SK-N-SH (cell line): ENCODE measurements at regions of chr17 and their contacts with region 1.

Region 1: GRCh38 chr17:732067-732901 is at the start of gene TLCD3A:
- DNase-seq: peak; percentile 95
- H3K4me3 ChIP-seq: peak within 1 kb of the TSS; percentile 68 to 85
- H3K27ac ChIP-seq: peak within 1 kb of the TSS; percentile 41 to 77; a peak in 3 of 4 replicates
- H3K4me1 ChIP-seq: peaks cover 0 to 8% of the 10 kb centered on the region in 2 experiments; a peak in 1 of 4 replicates
- H3K27me3 ChIP-seq: no peaks in the 10 kb centered on the region
- CTCF ChIP-seq: no peak
- EP300 ChIP-seq: no peak
- RAD21 ChIP-seq: no peak
- polyA plus RNA-seq, gene TLCD3A: 31.7 and 34.4 TPM in 2 replicates

Region 2: GRCh38 chr17:744937-745336 is 12.7 kb after region 1 on chr17:
- CTCF ChIA-PET with region 1: interaction called, 10 read pairs
- POLR2A ChIA-PET with region 1: interaction called, 3 read pairs
- DNase-seq: no peak
- H3K4me3 ChIP-seq: no peak overlapping the region
- H3K27ac ChIP-seq: no peak overlapping the region
- H3K4me1 ChIP-seq: no peaks in the 10 kb centered on the region; a peak in 1 of 4 replicates
- H3K27me3 ChIP-seq: no peaks in the 10 kb centered on the region
- CTCF ChIP-seq: no peak
- EP300 ChIP-seq: no peak
- RAD21 ChIP-seq: no peak